Activated naive CD4-positive, alpha-beta T cell treated with anti-CD3 and anti-CD28 coated beads for 36 hours (primary cell): ENCODE measurements at regions of chr7 and their contacts with region 1.

Region 1: GRCh38 chr7:128963327-128963757 is 25.6 kb downstream of the IRF5 start:
- DNase-seq: peak; percentile 80
- H3K4me3 Mint-ChIP-seq: peak overlapping the region; percentile 6
- H3K27ac Mint-ChIP-seq: peak overlapping the region; percentile 87
- H3K4me1 Mint-ChIP-seq: peaks cover 35% of the 10 kb centered on the region
- H3K27me3 Mint-ChIP-seq: no peaks in the 10 kb centered on the region

Region 2: DNA sequence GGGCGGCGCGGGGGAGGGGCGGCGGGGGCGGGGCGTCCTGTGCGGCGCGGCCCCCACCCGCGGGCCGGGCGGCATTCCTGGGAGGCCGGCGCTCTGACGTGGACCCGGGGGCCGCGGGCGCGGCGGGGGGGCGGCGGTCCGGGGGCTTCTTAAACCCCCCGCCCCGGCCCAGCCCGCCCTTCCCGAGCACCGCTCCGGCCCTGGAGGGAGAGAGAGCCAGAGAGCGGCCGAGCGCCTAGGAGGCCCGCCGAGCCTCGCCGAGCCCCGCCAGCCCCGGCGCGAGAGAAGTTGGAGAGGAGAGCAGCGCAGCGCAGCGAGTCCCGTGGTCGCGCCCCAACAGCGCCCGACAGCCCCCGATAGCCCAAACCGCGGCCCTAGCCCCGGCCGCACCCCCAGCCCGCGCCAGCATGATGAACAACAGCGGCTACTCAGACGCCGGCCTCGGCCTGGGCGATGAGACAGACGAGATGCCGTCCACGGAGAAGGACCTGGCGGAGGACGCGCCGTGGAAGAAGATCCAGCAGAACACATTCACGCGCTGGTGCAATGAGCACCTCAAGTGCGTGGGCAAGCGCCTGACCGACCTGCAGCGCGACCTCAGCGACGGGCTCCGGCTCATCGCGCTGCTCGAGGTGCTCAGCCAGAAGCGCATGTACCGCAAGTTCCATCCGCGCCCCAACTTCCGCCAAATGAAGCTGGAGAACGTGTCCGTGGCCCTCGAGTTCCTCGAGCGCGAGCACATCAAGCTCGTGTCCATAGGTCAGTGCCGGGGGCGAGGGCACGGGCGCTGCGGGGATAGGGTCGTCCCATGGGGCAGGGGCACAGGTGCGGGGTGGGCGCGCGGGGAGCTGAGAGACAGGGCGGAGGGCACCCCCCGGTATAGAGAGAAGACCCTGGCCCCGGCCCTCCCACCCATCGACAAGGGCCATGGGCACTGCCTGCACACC is 132.8 kb before region 1 on chr7 and contains the start of gene FLNC:
- CTCF ChIA-PET with region 1: no interaction called
- intact Hi-C with region 1: no loop called
- DNase-seq: peak; percentile 47
- H3K4me3 Mint-ChIP-seq: peak within 1 kb of the TSS; percentile 56
- H3K27ac Mint-ChIP-seq: no peak within 1 kb of the TSS
- H3K4me1 Mint-ChIP-seq: peaks cover 17% of the 10 kb centered on the region
- H3K27me3 Mint-ChIP-seq: peaks cover 41% of the 10 kb centered on the region
- total RNA-seq, gene FLNC: 0.02 to 0.05 TPM

Region 3: GRCh38 chr7:128904381-128905197 is 58.8 kb before region 1 on chr7:
- CTCF ChIA-PET with region 1: no interaction called
- intact Hi-C with region 1: loop called (anchors 1 kb)
- DNase-seq: peak; percentile 42
- H3K4me3 Mint-ChIP-seq: no peak overlapping the region
- H3K27ac Mint-ChIP-seq: no peak overlapping the region
- H3K4me1 Mint-ChIP-seq: no peaks in the 10 kb centered on the region
- H3K27me3 Mint-ChIP-seq: peaks cover 15% of the 10 kb centered on the region

Region 4: DNA sequence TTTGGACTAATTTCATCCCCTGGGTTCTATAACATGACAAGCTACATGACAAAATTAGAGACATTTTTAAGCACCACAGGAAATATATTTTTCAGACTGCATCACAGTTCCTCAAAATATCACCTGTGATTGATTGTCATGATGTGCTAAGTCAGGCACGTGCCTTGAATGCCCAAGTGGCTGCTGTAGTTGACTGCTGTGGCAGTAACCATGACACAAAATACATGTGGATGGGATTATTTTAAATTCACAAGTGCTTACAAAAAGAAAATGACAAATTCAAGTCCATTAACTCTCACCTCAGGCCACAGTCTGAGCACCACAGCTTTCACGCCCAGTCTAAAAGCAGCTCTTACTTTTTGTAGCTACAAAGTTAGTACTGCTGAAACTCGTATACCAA is 46.1 kb after region 1 on chr7:
- CTCF ChIA-PET with region 1: no interaction called
- intact Hi-C with region 1: loop called (anchors 1 kb)
- DNase-seq: no peak
- H3K4me3 Mint-ChIP-seq: no peak overlapping the region
- H3K27ac Mint-ChIP-seq: peak overlapping the region; percentile 84
- H3K4me1 Mint-ChIP-seq: peaks cover 35% of the 10 kb centered on the region
- H3K27me3 Mint-ChIP-seq: no peaks in the 10 kb centered on the region

Region 5: DNA sequence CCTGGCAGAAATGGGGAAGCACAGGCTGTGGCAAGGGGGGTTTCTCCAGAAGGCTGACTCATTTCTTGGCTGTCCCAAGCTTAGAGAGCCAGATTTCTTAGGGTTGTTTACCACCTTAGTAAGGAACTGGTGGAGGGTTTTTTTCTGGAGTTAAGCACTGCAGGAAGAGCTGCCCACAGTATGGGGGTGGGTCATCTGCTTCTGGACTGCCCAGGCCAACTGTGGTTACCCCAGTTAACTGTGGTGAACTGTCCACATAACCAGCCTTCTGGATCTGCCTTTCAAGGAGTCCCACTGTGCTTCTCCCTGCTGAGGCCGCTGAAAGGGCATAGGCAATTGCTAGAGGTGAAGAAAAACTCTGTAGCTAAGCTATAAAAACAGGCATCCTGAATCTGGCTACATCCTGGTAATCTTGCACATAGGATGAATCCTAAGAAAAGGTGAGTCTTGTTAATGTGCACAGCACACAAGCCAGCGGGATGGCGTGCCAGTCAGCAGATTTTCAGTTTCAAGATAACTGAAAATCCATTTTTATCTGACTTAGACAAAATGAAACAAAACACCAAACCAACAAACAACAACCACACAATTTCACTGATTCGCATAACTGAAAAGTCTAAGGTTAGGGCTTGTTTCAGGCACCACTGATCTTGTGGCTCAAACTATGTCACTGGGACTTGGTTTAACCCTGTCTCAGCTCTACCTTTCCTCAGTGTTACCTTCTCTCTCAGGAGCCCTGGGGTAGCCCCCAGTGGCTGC is 159.6 kb after region 1 on chr7:
- CTCF ChIA-PET with region 1: no interaction called
- intact Hi-C with region 1: loop called (anchors 1 kb)
- DNase-seq: peak; percentile 74
- H3K4me3 Mint-ChIP-seq: no peak overlapping the region
- H3K27ac Mint-ChIP-seq: peak overlapping the region; percentile 73
- H3K4me1 Mint-ChIP-seq: peaks cover 24% of the 10 kb centered on the region
- H3K27me3 Mint-ChIP-seq: peaks cover 2% of the 10 kb centered on the region